ENCODE measurements at regions of chr1 and their contacts with region 1.

Region 1: DNA sequence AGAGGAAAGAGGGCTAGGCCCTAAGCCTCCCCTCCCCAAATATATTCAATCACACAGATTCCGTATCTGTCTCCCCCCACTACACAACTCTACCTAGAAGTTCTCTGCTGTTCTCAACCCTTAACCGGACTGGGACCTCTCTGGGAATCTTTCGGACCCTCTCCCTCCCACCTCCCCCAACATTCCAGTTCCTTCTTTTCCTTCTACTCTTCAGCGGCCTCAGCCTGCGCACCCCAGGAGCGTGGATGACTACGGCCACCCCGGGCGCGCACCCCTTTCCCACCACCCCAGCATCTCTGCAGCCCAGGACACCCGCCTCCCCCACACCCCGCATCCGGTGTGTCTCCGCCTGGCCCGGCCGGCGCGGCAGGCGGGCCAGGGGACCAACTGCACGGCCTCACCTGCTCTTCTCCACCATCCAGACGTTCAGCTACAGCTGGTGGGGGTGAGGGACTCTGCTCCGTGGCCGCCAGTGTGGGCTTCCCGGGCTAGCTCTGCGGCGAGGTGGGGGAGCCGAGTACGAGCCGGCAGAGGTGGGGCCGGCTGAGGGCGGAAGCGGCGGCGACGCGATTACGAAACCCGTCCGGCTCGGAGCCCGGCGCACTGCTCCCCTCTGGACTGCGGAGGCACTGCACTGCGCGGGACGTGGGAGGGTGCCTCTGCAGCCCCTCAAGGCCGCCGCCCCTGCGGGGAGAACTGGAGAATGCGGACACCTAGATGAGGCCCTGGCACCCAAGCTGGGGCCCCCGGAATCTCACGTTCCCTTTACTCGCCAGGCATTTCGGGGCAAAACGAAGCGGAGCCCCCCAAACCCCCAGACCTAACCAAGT is at the start of gene CDC42SE1:
- DNase-seq: peak; percentile 92
- ATAC-seq: peak; percentile 80
- H3K4me3 Mint-ChIP-seq: peak within 1 kb of the TSS; percentile 96
- H3K27ac Mint-ChIP-seq: peak within 1 kb of the TSS; percentile 95
- H3K4me1 Mint-ChIP-seq: peaks cover 57% of the 10 kb centered on the region
- H3K27me3 Mint-ChIP-seq: no peaks in the 10 kb centered on the region
- CTCF ChIP-seq: peak; percentile 86
- total RNA-seq, gene CDC42SE1: 86.5 to 92.8 TPM

Region 2: GRCh38 chr1:150961799-150962198 is 97.5 kb before region 1 on chr1:
- CTCF ChIA-PET with region 1: no interaction called
- POLR2A ChIA-PET with region 1: no interaction called
- intact Hi-C with region 1: no loop called
- DNase-seq: no peak
- ATAC-seq: no peak
- H3K4me3 Mint-ChIP-seq: no peak overlapping the region
- H3K27ac Mint-ChIP-seq: peak overlapping the region; percentile 64
- H3K4me1 Mint-ChIP-seq: peaks cover 2% of the 10 kb centered on the region
- H3K27me3 Mint-ChIP-seq: no peaks in the 10 kb centered on the region
- CTCF ChIP-seq: no peak

Region 3: DNA sequence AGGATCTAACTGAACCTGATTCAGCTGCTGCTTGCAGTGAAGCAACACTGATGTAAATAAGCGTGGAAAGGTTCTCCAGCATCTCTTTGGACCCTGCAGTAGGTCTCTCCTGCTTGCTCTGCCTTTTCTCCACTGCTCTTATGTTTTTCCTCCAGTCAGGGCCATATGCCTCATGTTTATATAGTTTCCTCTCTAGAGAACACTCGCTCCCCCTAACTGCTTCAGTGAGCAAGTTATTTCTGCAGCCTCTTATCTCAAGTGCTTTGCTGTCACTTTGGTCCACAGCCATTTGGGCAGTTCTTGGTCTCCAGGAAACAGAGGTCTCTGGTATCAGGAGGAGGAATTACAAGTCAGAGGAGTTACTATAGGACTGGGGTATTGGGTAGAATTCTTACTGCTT is 45.8 kb before region 1 on chr1:
- CTCF ChIA-PET with region 1: no interaction called
- POLR2A ChIA-PET with region 1: no interaction called
- intact Hi-C with region 1: no loop called
- DNase-seq: no peak
- ATAC-seq: no peak
- H3K4me3 Mint-ChIP-seq: no peak overlapping the region
- H3K27ac Mint-ChIP-seq: no peak overlapping the region
- H3K4me1 Mint-ChIP-seq: peaks cover 36% of the 10 kb centered on the region
- H3K27me3 Mint-ChIP-seq: no peaks in the 10 kb centered on the region
- CTCF ChIP-seq: no peak

Region 4: GRCh38 chr1:151047925-151048645 is 11.2 kb before region 1 on chr1:
- CTCF ChIA-PET with region 1: interaction called, 12 read pairs
- POLR2A ChIA-PET with region 1: interaction called, 22 read pairs
- intact Hi-C with region 1: no loop called
- DNase-seq: peak; percentile 78
- ATAC-seq: peak; percentile 85
- H3K4me3 Mint-ChIP-seq: peak overlapping the region; percentile 83
- H3K27ac Mint-ChIP-seq: peak overlapping the region; percentile 82
- H3K4me1 Mint-ChIP-seq: peaks cover 51% of the 10 kb centered on the region
- H3K27me3 Mint-ChIP-seq: no peaks in the 10 kb centered on the region
- CTCF ChIP-seq: peak; percentile 64

Measured in activated CD8-positive, alpha-beta T cell treated with anti-CD3 and anti-CD28 coated beads for 36 hours (primary cell).